Mammary epithelial cell (primary cell): ENCODE measurements at regions of chr7 and their contacts with region 1.

Region 1: DNA sequence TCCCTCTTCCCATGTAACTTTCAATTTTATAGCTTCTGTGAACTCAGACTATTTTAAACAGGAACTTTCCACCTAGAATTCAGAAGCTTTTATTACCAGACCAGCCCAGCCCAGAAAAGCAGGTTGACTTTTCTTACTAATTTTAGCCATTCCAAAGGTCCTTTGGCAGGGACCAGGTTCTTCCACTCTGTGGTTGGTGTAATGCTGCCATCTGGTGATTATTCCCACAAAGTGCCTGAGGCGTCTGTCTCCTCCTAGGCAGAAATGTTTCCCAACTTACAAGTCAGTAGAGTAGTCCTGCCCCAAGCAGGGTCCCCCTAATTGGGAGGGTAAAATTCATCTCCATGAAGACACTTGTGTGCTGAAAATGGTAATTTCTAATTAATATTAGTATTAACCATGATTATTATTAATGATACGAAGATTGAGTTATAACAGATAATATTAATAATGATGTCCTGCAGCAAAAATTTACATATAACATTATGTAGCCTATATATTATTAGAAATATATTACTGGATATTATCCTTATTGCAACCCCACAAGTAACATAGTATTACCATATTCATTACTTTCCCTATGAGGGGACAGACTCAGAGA is 53.0 kb upstream of the PPP1R17 start:
- DNase-seq: peak; percentile 48
- H3K4me3 ChIP-seq: no peak overlapping the region
- H3K27ac ChIP-seq: no peak overlapping the region
- H3K4me1 ChIP-seq: no peaks in the 10 kb centered on the region
- H3K27me3 ChIP-seq: no peaks in the 10 kb centered on the region
- CTCF ChIP-seq: peak; percentile 59 to 72

Region 2: GRCh38 chr7:30800785-30801252 is 833.2 kb before region 1 on chr7:
- CTCF ChIA-PET with region 1: no interaction called
- dilution Hi-C with region 1: no loop called
- in situ Hi-C with region 1: no loop called
- intact Hi-C with region 1: loop called (anchors 10 kb)
- DNase-seq: peak; percentile 86
- H3K4me3 ChIP-seq: no peak overlapping the region
- H3K27ac ChIP-seq: peak overlapping the region; percentile 24
- H3K4me1 ChIP-seq: peaks cover 75% of the 10 kb centered on the region
- H3K27me3 ChIP-seq: no peaks in the 10 kb centered on the region
- CTCF ChIP-seq: peak; percentile 71 to 72

Region 3: GRCh38 chr7:31134246-31135188 is 499.5 kb before region 1 on chr7:
- CTCF ChIA-PET with region 1: no interaction called
- dilution Hi-C with region 1: no loop called
- in situ Hi-C with region 1: loop called (anchors 10 to 25 kb)
- intact Hi-C with region 1: loop called (anchors 1 kb)
- DNase-seq: peak; percentile 52
- H3K4me3 ChIP-seq: no peak overlapping the region
- H3K27ac ChIP-seq: no peak overlapping the region
- H3K4me1 ChIP-seq: no peaks in the 10 kb centered on the region
- H3K27me3 ChIP-seq: no peaks in the 10 kb centered on the region
- CTCF ChIP-seq: peak; percentile 68

Region 4: DNA sequence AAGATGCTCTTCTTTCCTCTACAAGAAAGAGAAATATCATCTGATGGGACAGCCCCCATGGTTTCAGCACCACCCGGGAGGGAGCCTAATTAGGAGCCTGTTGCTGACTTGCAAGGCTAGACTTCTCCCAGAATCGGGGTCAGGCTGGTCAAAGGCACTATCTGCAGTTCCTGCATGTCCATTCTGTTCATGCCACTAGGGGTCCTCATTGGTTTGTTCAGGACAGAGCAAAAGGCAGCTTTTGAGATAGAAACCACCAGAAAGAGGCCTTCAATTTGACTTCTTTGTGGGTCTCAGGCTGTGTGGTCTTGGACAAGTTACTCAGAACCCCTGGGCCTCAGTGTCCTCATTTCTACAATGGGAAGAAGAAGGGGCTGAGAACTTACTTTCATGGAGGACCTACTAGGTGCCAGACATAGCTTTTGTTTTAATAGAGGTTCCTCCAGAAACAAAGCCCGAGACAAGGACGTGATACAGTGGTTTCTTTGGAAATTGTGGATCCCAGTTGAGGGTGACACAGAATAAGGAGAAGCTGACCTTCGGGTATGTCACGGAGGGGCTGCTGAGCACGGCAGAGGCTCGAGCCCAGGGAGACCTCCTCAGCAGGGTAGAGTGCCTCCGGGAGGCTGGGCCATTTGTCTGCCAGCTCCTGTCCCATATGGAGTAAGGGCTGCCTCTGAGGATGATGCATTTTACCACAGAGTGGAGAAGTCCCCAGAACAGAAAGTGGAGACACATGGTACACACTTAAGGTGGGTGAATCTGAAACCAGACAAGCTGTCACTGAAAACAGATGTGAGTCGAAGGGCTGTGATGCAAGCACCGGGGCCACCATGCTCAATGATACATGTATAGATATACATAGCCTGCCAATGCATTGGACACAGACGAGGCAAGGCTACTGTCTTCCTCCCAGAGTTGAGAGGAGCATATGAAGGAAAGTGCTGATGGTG is 260.4 kb before region 1 on chr7:
- CTCF ChIA-PET with region 1: no interaction called
- dilution Hi-C with region 1: no loop called
- in situ Hi-C with region 1: loop called in 1 of 2 experiments (anchors 10 kb)
- intact Hi-C with region 1: loop called (anchors 1 kb)
- DNase-seq: peak; percentile 47
- H3K4me3 ChIP-seq: no peak overlapping the region
- H3K27ac ChIP-seq: no peak overlapping the region
- H3K4me1 ChIP-seq: no peaks in the 10 kb centered on the region
- H3K27me3 ChIP-seq: peaks cover 2% of the 10 kb centered on the region
- CTCF ChIP-seq: peak; percentile 86 to 91

Region 5: DNA sequence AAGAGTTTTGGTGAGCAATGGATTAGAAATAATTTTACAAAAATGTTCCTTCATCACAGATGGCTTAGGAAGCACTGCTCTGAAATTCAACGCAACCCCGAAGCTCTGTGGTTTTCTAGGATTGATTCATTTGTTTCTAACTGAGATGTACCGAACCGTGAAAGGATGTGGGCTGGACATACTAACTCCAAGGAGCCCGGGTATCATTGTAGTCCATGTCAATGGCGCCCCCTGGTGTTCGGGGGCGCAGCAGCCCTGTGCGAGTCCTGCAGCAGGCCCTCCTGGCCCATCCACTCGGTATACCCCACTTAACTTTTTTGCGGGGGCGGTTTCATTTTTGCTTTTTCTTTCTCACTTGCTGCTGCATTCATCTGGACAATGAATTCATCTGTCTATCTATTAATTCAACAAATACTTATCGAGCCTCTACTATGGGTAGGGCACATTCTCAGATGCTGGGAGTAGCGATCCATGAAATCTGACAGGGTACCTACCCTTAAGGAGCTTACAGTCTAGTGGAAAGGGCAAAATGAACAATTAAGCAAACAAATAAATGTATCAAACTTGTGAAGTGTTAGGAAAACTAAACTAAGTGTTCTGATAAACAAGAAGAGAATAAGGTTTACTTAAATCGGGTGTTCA is 145.3 kb before region 1 on chr7:
- CTCF ChIA-PET with region 1: no interaction called
- dilution Hi-C with region 1: no loop called
- in situ Hi-C with region 1: no loop called
- intact Hi-C with region 1: loop called (anchors 5 kb)
- DNase-seq: peak; percentile 57
- H3K4me3 ChIP-seq: no peak overlapping the region
- H3K27ac ChIP-seq: no peak overlapping the region
- H3K4me1 ChIP-seq: peaks cover 21% of the 10 kb centered on the region
- H3K27me3 ChIP-seq: no peaks in the 10 kb centered on the region
- CTCF ChIP-seq: peak; percentile 70 to 80